AG04449 (cell line): ENCODE measurements at regions of chr3 and their contacts with region 1.

Region 1: DNA sequence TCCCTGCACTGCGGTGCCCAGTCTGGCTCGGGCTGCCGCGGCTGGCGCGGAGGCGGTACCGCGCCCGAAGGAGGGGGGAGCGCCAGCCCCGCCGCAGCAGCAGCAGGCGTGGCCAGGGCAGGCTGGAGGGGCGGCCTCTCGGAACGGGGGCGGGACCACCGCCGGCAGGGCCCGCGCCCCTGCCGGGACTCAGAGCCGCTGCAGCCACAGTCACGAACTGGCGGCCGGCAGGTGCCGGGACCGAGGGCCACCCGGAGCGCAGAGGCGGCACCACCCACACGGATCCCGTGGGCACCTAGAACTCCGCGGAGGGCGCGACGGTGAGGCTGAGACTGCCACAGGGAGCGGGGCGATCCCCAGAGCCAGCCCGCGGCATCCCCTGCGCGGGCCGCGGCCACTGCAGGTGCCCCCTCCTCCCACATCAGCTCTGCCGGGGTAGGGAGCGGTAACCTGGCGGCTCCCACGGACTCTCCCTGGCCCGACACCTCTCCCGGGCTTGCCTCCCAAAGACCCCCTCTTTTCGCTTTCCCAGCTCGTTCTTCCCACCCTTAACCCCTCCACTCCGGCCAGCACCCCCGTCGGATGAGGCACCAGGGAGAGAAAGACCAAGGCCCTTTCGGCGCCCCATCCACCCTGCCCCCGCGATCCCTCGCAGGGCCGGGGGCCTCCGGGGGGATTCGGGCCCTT is at the start of gene VWA5B2:
- DNase-seq: no peak
- H3K4me3 ChIP-seq: peak within 1 kb of the TSS; percentile 40
- CTCF ChIP-seq: no peak

Region 2: DNA sequence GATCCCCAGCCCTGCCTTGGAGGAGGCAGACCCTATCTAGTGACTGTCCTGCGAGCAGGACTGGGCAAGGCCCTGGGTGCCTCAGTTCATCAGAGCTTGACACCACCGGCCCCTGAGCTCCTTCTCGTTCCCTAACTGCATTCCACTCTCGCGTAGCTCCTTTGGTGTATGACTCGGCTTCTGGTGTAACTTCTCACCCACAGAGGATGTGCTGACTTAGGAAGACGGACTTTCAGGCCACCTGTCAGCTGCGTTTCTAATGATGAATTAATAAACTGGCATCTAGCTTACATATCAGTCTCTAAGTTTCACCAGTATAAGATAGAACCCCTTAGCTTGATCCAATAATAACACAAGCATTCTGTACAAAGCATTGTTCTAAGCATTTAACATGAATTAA is 26.0 kb before region 1 on chr3:
- CTCF ChIA-PET with region 1: interaction called, 28 read pairs
- POLR2A ChIA-PET with region 1: no interaction called
- DNase-seq: no peak
- H3K4me3 ChIP-seq: no peak overlapping the region
- CTCF ChIP-seq: no peak

Region 3: GRCh38 chr3:184209146-184209923 is 20.2 kb before region 1 on chr3:
- CTCF ChIA-PET with region 1: interaction called, 42 read pairs
- POLR2A ChIA-PET with region 1: no interaction called
- DNase-seq: no peak
- H3K4me3 ChIP-seq: no peak overlapping the region
- CTCF ChIP-seq: no peak

Region 4: DNA sequence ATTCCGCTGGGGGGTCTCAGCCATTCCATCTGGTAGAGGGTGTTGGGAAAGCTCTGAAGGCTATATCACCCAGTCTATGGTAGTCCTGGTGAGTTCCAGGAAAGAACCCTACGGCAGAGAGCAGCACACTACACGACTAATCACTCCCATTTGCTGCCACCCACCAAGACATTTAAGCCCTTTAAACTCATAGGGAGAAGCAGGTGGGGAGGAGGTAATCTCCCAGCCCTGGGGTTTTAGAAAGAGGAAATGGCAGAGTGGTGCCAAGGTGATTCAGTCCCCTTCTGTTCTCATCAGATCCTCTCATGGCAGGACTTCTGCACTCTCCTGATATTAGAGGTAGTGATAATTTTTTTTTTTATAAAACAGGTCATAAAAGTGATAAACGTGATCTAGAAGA is 10.7 kb before region 1 on chr3:
- CTCF ChIA-PET with region 1: interaction called, 42 read pairs
- POLR2A ChIA-PET with region 1: no interaction called
- DNase-seq: no peak
- H3K4me3 ChIP-seq: no peak overlapping the region
- CTCF ChIP-seq: no peak

Region 5: DNA sequence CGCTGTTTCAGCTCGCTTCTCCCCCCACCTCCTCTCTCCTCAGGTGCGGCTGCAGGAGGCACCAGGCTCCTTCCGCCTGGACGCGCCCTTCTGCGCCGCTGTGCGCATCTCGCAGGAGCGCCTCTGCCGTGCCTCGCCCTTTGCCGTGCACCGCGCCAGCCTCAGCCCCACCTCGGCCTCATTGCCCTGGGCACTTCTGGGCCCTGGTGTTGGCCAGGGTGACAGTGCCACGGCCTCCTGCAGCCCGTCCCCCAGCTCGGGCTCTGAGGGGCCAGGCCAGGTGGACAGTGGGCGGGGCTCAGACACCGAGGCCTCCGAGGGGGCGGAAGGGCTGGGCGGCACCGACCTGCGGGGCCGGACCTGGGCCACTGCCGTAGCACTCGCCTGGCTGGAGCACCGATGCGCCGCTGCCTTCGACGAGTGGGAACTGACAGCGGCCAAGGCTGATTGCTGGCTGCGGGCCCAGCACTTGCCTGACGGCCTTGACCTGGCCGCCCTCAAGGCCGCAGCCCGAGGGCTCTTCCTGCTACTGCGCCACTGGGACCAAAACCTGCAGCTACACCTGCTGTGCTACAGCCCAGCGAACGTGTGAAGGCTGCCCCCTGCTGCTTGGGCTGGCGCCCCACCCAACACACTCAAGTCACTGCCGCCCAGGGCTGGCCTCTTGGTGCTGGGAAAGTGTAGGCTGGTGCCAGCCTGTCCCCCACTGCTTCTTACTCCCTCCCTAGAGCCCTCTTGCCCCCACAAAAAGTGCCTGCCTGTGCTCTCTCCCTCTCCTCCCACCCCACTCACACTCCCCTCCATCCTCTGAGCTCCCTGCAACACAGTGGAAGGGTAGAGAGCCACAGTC is 12.1 kb after region 1 on chr3:
- CTCF ChIA-PET with region 1: interaction called, 51 read pairs
- POLR2A ChIA-PET with region 1: no interaction called
- DNase-seq: no peak
- H3K4me3 ChIP-seq: no peak overlapping the region
- CTCF ChIP-seq: peak; percentile 56

Region 6: GRCh38 chr3:184255291-184256039 is 25.9 kb after region 1 on chr3:
- CTCF ChIA-PET with region 1: interaction called, 20 read pairs
- POLR2A ChIA-PET with region 1: no interaction called
- DNase-seq: no peak
- H3K4me3 ChIP-seq: no peak overlapping the region
- CTCF ChIP-seq: no peak